ENCODE measurements at regions of chr4 and their contacts with region 1.

Region 1: GRCh38 chr4:67545199-67546003 is at the start of gene CENPC:
- DNase-seq: peak; percentile 85
- ATAC-seq: peak; percentile 93
- H3K4me3 Mint-ChIP-seq: peak within 1 kb of the TSS; percentile 96
- H3K27ac Mint-ChIP-seq: peak within 1 kb of the TSS; percentile 98
- H3K4me1 Mint-ChIP-seq: peaks cover 50% of the 10 kb centered on the region
- H3K27me3 Mint-ChIP-seq: no peaks in the 10 kb centered on the region
- CTCF ChIP-seq: no peak
- total RNA-seq, gene CENPC: 40.5 and 46.0 TPM in 2 replicates

Region 2: GRCh38 chr4:66943112-66943511 is 602.3 kb before region 1 on chr4:
- CTCF ChIA-PET with region 1: no interaction called
- POLR2A ChIA-PET with region 1: no interaction called
- intact Hi-C with region 1: no loop called
- DNase-seq: no peak
- ATAC-seq: no peak
- H3K4me3 Mint-ChIP-seq: no peak overlapping the region
- H3K27ac Mint-ChIP-seq: no peak overlapping the region
- H3K4me1 Mint-ChIP-seq: no peaks in the 10 kb centered on the region
- H3K27me3 Mint-ChIP-seq: no peaks in the 10 kb centered on the region
- CTCF ChIP-seq: no peak

Region 3: GRCh38 chr4:67106861-67107460 is 438.4 kb before region 1 on chr4:
- CTCF ChIA-PET with region 1: no interaction called
- POLR2A ChIA-PET with region 1: no interaction called
- intact Hi-C with region 1: no loop called
- DNase-seq: no peak
- ATAC-seq: no peak
- H3K4me3 Mint-ChIP-seq: no peak overlapping the region
- H3K27ac Mint-ChIP-seq: no peak overlapping the region
- H3K4me1 Mint-ChIP-seq: no peaks in the 10 kb centered on the region
- H3K27me3 Mint-ChIP-seq: no peaks in the 10 kb centered on the region
- CTCF ChIP-seq: no peak

Region 4: GRCh38 chr4:67327262-67328017 is 218.0 kb before region 1 on chr4:
- CTCF ChIA-PET with region 1: no interaction called
- POLR2A ChIA-PET with region 1: no interaction called
- intact Hi-C with region 1: no loop called
- DNase-seq: no peak
- ATAC-seq: peak; percentile 58
- H3K4me3 Mint-ChIP-seq: no peak overlapping the region
- H3K27ac Mint-ChIP-seq: no peak overlapping the region
- H3K4me1 Mint-ChIP-seq: no peaks in the 10 kb centered on the region
- H3K27me3 Mint-ChIP-seq: peaks cover 7% of the 10 kb centered on the region
- CTCF ChIP-seq: no peak

Region 5: GRCh38 chr4:67558493-67558892 is 13.1 kb after region 1 on chr4 and contains the start of gene STAP1:
- CTCF ChIA-PET with region 1: interaction called, 3 read pairs
- POLR2A ChIA-PET with region 1: interaction called, 11 read pairs
- intact Hi-C with region 1: loop called (anchors 1 kb)
- DNase-seq: peak; percentile 27
- ATAC-seq: peak; percentile 80
- H3K4me3 Mint-ChIP-seq: peak within 1 kb of the TSS; percentile 98
- H3K27ac Mint-ChIP-seq: peak within 1 kb of the TSS; percentile 99
- H3K4me1 Mint-ChIP-seq: peaks cover 76% of the 10 kb centered on the region
- H3K27me3 Mint-ChIP-seq: no peaks in the 10 kb centered on the region
- CTCF ChIP-seq: no peak
- total RNA-seq, gene STAP1: 46.4 and 50.3 TPM in 2 replicates

Region 6: GRCh38 chr4:67581208-67581857 is 35.9 kb after region 1 on chr4:
- CTCF ChIA-PET with region 1: interaction called, 5 read pairs
- POLR2A ChIA-PET with region 1: interaction called, 13 read pairs
- intact Hi-C with region 1: no loop called
- DNase-seq: no peak
- ATAC-seq: peak; percentile 81
- H3K4me3 Mint-ChIP-seq: peak overlapping the region; percentile 55
- H3K27ac Mint-ChIP-seq: peak overlapping the region; percentile 83
- H3K4me1 Mint-ChIP-seq: peaks cover 46% of the 10 kb centered on the region
- H3K27me3 Mint-ChIP-seq: no peaks in the 10 kb centered on the region
- CTCF ChIP-seq: no peak

Region 7: GRCh38 chr4:67632492-67632891 is 87.1 kb after region 1 on chr4:
- CTCF ChIA-PET with region 1: interaction called, 4 read pairs
- POLR2A ChIA-PET with region 1: interaction called, 4 read pairs
- intact Hi-C with region 1: loop called (anchors 2 kb)
- DNase-seq: no peak
- ATAC-seq: peak; percentile 96
- H3K4me3 Mint-ChIP-seq: peak overlapping the region; percentile 64
- H3K27ac Mint-ChIP-seq: peak overlapping the region; percentile 72
- H3K4me1 Mint-ChIP-seq: peaks cover 19% of the 10 kb centered on the region
- H3K27me3 Mint-ChIP-seq: no peaks in the 10 kb centered on the region
- CTCF ChIP-seq: no peak

Region 8: DNA sequence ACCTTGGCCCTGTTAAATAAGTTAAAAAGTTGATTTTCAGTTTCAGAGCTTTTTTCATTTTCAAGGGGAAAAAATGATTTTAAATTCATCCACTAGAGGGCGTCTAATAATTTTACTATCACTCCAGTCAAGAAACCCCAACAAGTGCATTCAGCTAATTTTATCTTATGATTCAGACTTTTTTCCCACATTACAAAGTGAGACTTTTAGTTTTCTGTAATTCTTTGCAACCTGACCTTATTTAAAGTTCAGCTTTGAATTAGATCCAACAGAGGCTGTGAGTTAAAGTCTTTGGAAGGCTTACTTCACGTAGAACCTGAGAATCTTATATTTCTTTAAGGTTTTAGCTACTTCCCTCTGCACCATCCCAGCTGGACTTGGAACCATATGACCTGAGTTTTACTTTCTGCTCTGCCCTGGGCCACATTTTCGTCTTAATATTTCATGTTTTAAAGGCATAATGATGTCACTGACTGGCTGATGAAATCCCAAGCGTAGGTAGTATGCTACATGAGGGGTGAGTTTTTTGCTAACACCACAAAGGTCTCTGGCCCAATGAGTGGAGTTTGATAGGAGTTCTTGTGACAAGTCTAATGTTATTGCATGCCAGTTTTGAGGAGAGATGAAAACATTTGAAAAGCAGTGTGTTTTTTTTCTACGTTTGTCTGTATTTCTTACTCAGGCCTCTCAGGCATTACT is 201.5 kb after region 1 on chr4:
- CTCF ChIA-PET with region 1: interaction called, 10 read pairs
- POLR2A ChIA-PET with region 1: no interaction called
- intact Hi-C with region 1: loop called (anchors 1 kb)
- DNase-seq: no peak
- ATAC-seq: no peak
- H3K4me3 Mint-ChIP-seq: no peak overlapping the region
- H3K27ac Mint-ChIP-seq: no peak overlapping the region
- H3K4me1 Mint-ChIP-seq: peaks cover 5% of the 10 kb centered on the region
- H3K27me3 Mint-ChIP-seq: no peaks in the 10 kb centered on the region
- CTCF ChIP-seq: no peak

Region 9: DNA sequence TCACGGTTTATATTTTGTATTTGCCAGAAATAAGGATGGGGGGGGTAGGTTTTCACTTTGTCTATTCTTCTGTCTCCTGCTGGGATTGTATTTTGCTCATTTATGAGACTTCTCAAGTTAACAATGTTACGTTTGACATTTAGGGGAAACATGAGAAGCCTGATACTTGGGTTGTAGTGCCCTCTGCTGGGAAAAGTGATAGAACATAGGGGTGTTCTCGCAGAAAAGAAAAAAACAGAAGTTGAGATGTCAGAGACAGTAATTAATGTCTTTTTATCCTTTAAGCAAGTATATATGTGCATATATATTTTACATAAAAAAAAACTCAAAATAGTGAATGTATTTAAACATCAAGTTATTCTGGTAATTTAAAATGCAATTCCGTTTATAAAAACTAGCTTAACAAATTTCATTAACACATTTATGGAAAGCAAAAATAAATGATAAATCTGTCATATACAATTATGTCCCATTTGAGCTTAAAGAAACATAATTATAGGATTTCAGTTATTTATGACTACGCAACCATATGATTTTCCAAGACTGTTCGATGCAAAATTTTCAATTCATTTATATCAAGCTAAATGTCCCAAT is 630.3 kb after region 1 on chr4:
- CTCF ChIA-PET with region 1: no interaction called
- POLR2A ChIA-PET with region 1: no interaction called
- intact Hi-C with region 1: loop called (anchors 1 kb)
- DNase-seq: no peak
- ATAC-seq: peak; percentile 45
- H3K4me3 Mint-ChIP-seq: no peak overlapping the region
- H3K27ac Mint-ChIP-seq: no peak overlapping the region
- H3K4me1 Mint-ChIP-seq: no peaks in the 10 kb centered on the region
- H3K27me3 Mint-ChIP-seq: no peaks in the 10 kb centered on the region
- CTCF ChIP-seq: no peak